Mammary epithelial cell (primary cell): ENCODE measurements at regions of chr1 and their contacts with region 1.

Region 1: GRCh38 chr1:151693076-151693651 is 23.4 kb downstream of the CELF3 start:
- DNase-seq: peak; percentile 26
- H3K4me3 ChIP-seq: no peak overlapping the region
- H3K27ac ChIP-seq: no peak overlapping the region
- H3K4me1 ChIP-seq: no peaks in the 10 kb centered on the region
- H3K27me3 ChIP-seq: no peaks in the 10 kb centered on the region
- CTCF ChIP-seq: peak; percentile 72 to 79

Region 2: GRCh38 chr1:151443846-151444782 is 249.1 kb before region 1 on chr1:
- CTCF ChIA-PET with region 1: no interaction called
- dilution Hi-C with region 1: no loop called
- in situ Hi-C with region 1: no loop called
- intact Hi-C with region 1: loop called (anchors 5 kb)
- DNase-seq: peak; percentile 77
- H3K4me3 ChIP-seq: no peak overlapping the region
- H3K27ac ChIP-seq: no peak overlapping the region
- H3K4me1 ChIP-seq: peaks cover 10% of the 10 kb centered on the region
- H3K27me3 ChIP-seq: no peaks in the 10 kb centered on the region
- CTCF ChIP-seq: peak; percentile 77 to 85

Region 3: GRCh38 chr1:151534665-151535278 is 158.4 kb before region 1 on chr1:
- CTCF ChIA-PET with region 1: no interaction called
- dilution Hi-C with region 1: no loop called
- in situ Hi-C with region 1: no loop called
- intact Hi-C with region 1: loop called (anchors 2 kb)
- DNase-seq: peak; percentile 57
- H3K4me3 ChIP-seq: no peak overlapping the region
- H3K27ac ChIP-seq: no peak overlapping the region
- H3K4me1 ChIP-seq: peaks cover 16% of the 10 kb centered on the region
- H3K27me3 ChIP-seq: no peaks in the 10 kb centered on the region
- CTCF ChIP-seq: peak; percentile 95 to 98

Region 4: DNA sequence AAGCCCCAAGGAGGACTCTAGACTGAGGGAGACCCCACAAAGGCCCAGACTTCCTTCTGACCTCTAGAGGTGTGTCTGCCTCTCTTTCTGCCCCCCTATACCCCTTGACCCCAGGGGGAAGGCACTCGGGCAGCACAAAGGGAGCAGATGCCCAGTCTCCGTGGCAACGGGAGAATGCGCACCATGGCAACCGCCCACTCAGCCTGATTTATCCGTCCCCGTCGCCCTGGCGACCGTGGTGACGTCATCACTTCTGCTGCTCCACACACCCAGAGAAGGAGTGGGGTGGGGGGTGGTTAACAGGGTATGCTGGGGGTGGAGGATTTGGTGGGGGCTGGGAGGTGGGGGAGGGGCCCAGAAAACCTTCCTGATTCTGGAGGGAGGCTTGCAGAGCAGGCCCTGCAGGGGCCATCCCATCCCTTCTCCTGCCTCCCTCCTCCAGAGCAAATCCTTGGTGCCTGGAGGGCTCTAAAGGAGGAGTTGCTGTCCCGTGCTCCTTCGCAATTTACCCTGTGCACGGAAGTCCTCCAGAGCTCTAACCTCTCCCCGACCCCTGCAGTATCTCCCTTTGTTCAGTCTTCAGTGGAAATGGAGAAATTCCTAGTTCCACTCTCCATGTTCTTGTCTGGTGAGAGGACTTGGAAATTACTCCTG is 17.1 kb after region 1 on chr1:
- CTCF ChIA-PET with region 1: interaction called, 15 read pairs
- dilution Hi-C with region 1: no loop called
- in situ Hi-C with region 1: no loop called
- intact Hi-C with region 1: no loop called
- DNase-seq: no peak
- H3K4me3 ChIP-seq: no peak overlapping the region
- H3K27ac ChIP-seq: no peak overlapping the region
- H3K4me1 ChIP-seq: peaks cover 11% of the 10 kb centered on the region
- H3K27me3 ChIP-seq: no peaks in the 10 kb centered on the region
- CTCF ChIP-seq: no peak